Right ventricle myocardium superior (tissue), 1 donor: ENCODE measurements at regions of chr1 and their contacts with region 1.

Region 1: DNA sequence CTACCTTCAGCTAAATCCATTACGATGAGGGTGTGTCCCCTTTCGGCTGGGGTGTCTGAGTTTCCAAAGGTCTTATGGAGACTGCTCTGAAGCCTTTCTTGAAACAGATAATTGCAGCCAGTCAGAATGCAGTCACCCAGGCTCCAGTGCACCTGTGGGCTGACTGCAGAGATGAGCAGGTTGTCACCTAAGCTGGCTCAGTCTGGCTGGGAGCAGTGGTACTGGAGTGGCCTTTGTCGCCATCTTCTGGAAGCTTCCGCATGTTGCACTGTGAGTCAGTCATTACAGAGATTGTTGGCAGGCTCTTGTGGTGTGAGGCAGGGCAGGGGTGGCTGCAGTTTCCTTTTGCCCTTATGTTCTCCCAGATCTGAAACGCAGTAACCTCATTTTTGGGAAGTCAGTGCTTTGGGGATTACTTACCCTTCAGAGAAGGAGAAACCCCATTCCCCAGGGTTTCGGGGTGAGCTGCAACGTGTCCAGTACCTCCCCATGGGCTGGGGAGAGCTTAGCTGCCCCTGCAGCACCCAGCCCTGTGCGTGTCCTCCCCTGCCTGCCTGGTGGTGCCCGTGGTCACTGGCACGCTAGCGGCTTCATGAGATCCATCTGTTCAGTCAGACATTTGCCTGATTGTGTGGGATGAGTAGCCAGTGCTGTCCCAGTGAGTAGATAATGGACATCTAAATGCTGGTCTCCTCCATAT is 48.0 kb downstream of the SMYD2 start:
- DNase-seq: peak; percentile 82
- ATAC-seq: peak; percentile 87

Region 2: DNA sequence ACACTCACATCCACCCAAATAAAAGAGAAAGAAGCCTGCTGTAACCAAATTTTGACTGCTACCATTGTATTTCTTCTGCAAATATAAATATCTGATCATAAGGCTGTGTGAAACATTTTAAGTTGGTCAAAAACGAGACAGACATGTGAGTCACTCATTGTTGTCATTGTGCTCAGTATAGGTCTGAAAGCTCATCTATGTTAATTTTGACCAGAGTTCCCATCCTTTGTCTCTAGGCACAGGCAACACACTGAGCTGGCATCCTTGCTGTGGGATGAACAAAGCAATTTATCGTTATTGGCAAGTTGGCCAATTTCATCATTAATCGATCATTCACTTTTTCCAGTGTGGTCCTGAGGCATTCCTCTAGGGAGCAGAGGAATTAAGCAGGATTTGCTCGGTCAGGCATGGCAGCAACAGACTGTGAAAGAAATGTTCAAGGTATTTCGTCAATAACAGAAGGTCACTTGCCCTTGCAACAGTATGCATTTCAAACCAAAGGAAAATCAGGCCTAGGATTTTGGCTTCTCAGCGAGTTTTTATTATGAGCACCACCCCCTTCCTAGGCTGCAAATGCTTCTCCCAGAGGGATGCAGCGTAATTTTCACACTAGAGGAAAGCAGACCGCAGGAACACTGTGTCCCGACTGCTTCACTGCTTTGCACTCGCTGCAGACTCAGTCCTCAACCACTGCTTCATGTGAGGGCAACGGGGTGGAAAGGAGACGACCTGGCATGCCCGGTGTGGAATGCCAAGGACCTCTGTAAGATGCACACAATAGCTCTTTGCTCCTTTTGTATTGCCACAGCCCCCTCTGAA is 135.9 kb before region 1 on chr1:
- intact Hi-C with region 1: no loop called
- DNase-seq: no peak
- ATAC-seq: no peak

Region 3: DNA sequence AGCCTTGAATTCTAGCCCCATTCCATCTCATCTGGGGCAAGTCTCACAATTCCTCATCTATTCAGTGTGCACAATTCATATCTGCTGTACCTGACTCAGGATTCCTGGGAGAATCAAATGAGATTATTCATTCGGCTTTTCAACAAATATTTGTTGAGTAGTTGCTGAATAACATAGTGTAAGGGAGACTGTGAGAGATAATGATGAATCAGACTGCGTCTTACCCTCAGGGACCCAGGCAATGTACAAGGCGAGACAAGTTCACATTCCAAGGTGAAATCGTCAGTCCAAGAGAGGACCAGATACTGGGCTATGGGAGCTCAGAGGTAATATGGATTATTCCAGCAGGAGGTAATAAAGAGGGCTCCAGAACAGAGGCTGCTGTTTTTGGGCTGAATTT is 115.8 kb before region 1 on chr1:
- intact Hi-C with region 1: loop called (anchors 2 kb)
- DNase-seq: no peak
- ATAC-seq: no peak

Region 4: DNA sequence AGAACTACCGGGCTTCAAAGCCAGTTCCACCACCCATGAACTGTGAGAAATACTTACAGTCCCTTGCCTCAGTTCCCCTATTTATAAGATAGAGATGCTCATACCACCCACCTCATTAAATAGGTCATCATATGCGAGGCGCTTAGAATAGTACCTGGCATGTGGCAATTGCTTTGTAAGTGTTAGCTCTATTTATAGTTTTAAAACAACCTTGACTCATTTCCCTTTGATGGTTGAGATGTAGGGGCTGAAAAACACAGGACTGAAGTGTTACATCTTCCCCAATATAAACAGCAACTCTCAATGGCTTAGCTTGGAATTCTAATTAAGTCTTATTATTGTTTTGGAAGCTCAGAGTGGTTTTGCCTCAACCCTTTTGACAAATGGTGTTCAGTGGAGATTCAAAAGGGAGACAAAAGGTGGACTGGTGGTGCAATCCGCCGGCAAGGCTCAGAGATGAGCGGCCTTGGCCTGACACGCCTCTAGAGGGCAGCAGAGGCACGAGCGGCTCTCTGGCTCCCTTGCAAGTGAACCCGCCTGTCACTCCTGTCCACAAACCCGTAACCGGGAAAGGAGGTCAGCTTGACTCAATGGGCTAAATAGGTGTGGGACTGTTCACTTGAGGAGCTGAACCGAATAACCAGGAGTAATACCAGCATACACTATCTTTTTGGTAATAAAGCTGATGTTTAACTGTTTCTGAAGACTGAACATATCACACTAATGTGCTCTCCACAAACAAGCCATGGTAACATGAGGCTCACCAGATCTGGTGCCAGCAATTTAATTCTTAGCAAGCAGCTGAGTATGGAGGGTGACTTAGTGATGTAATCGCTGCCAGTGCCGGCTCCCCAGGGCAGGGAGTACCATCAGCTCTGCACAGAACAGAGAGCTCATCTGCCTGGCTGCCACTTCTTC is 67.5 kb before region 1 on chr1:
- intact Hi-C with region 1: loop called (anchors 2 kb)
- DNase-seq: peak; percentile 90
- ATAC-seq: peak; percentile 98

Region 5: DNA sequence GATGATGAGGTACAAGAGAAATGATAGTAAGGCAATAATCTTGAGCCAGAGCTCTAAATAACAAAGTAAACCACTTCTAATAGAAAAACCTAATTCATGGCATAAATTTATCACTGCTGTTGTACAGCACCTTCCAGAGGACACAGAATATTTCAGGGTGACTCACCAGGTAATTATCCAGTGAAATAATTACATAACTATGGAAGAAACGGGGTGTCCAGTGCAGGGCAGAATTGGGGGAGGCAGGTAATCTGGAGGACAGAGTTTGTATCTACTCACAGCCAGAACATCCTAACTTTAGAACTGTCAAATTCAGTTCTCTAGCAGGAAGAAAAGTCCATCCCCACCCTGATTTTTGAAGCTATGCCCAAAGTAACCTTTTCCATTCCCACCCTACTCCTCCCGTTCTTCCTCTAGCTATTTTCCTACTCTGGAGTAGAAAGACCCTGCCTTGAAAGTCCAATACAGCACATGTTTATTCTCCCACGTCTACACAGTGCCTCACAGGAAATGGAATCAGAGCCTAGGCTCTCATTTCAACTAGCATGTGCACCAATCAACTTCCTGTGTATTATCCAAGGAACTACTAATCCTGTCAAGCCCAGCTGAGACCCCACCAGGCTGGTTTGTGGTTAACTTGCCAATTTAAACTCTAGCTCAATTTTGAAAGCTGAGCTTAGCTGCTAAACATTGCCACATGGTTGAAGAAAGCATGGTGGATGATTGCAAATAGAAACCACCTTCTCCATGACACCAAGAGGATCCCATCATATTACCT is 125.9 kb after region 1 on chr1:
- intact Hi-C with region 1: no loop called
- DNase-seq: no peak
- ATAC-seq: no peak

Region 6: GRCh38 chr1:214551436-214552173 is 222.7 kb after region 1 on chr1 and contains the start of gene PTPN14:
- intact Hi-C with region 1: loop called (anchors 10 kb)
- DNase-seq: peak; percentile 92
- ATAC-seq: peak; percentile 92
- total RNA-seq, gene PTPN14: 25.1 TPM

Region 7: DNA sequence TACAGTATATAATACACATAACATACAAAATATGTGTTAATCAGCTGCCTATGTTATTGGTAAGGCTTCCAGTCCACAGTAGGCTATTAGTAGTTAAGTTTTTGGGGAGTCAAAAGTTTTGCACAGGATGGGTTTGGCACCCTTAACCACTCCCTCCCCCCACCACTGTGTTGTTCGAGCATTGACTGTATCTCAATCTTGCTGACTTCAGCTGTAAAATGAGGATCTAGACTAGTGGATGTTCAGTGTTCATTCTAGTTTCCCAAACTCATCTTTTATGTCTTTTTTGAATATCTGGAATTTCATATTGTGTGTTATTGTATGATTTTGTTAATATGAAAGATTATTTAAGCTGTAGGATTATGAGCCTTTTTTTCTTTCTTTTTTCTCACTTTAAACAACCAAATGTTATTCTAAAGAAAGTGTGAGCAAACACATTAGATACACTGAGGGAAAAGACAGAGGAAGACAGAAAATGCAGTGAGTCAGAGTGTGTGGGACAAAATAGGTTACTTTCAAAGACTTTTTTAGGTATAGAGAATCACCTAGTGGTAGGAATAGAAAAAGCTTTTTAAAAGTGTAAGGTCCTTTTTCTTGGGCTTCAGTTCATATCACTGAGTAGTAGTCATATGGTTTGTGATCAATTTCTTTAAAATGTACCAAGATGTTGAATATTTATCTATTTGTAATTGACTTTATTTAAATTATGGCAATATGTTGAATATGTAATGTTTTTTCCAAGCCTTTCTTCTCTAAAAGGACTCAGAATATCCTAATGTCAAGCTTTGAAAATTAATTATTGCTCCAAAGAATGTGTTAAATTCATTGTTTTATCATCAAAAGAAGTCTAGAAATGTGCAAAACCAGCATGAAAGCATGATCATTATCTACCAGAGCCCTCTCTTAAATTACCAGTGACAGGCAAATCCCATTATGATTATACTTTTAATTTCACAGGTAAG is 256.2 kb after region 1 on chr1:
- intact Hi-C with region 1: loop called (anchors 5 kb)
- DNase-seq: no peak
- ATAC-seq: peak; percentile 82